ENCODE measurements at regions of chr20 and their contacts with region 1.

Region 1: GRCh38 chr20:47620808-47621805 is 119.4 kb downstream of the NCOA3 start:
- H3K4me3 ChIP-seq: no peak overlapping the region
- H3K27ac ChIP-seq: no peak overlapping the region
- H3K4me1 ChIP-seq: no peaks in the 10 kb centered on the region
- CTCF ChIP-seq: peak; percentile 59

Region 2: DNA sequence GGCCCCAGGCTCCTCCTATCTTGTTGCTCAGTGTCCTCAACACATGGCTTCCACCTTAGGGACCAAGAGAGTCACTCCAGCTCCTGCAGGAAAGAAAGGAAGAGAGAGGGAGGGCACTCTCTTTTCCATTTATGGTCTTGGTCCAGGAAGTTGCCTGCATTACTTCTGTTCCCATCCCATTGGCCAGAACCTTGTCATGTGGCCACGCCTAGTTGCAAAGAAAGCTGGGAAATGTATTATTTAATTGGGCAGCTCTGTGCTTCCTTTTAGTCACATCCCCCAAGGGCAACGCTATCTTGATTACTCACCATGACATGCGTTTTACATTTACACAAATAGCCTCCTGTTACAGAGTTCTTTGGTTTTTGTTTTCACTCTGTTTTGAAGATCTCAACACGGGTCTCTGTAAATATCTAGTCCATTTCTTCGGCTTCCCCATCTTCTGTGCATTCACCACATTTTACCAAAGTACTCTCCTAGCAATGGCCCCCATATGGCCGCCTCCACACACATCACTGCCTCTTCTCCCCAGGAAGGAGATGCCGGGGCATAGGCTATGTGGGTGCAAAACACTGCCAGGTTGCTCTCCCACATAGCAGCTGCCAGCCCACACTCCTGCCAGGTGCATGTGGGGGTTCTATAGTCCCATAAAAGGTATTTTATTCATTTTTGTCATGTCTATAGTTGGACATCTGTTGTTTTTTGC is 228.9 kb before region 1 on chr20:
- CTCF ChIA-PET with region 1: interaction called, 19 read pairs
- POLR2A ChIA-PET with region 1: no interaction called
- H3K4me3 ChIP-seq: no peak overlapping the region
- H3K27ac ChIP-seq: no peak overlapping the region
- H3K4me1 ChIP-seq: no peaks in the 10 kb centered on the region
- CTCF ChIP-seq: no peak

Region 3: DNA sequence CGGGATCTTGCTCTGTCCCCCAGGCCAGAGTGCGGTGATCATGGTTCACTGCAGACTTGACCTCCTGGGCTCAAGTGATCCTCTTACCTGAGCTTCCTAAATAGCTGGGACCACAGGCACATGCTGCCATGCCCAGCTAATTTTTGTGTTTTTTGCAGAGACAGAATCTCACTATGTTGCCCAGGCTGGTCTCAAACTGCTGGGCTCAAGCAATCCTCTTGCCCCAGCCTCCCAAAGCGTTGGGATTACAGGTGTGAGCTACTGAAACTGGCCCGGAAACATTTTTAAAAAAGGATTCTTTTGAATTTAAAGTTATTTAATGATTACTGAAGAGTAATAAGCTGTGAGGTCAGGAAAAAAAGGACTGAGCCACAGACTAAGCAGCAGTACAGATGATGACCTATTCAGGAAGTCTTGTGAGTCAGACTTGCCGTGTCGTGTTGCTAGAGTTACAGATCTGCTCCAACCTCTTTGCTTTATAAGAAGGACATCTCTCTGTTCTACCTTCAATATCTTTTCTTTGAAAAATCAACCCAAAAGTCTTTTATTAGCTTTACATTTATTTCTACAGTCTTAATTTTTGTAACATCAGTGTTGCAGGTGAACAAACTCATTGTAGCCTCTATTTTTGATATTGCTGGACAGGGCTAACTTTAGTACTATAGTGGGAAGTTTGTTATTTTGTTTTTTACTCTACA is 10.7 kb before region 1 on chr20:
- CTCF ChIA-PET with region 1: interaction called, 21 read pairs
- POLR2A ChIA-PET with region 1: no interaction called
- H3K4me3 ChIP-seq: no peak overlapping the region
- H3K27ac ChIP-seq: no peak overlapping the region
- H3K4me1 ChIP-seq: peaks cover 6% of the 10 kb centered on the region; the same call in 1 of the 2 replicates
- CTCF ChIP-seq: no peak